ENCODE measurements at regions of chrX and their contacts with region 1.

Region 1: DNA sequence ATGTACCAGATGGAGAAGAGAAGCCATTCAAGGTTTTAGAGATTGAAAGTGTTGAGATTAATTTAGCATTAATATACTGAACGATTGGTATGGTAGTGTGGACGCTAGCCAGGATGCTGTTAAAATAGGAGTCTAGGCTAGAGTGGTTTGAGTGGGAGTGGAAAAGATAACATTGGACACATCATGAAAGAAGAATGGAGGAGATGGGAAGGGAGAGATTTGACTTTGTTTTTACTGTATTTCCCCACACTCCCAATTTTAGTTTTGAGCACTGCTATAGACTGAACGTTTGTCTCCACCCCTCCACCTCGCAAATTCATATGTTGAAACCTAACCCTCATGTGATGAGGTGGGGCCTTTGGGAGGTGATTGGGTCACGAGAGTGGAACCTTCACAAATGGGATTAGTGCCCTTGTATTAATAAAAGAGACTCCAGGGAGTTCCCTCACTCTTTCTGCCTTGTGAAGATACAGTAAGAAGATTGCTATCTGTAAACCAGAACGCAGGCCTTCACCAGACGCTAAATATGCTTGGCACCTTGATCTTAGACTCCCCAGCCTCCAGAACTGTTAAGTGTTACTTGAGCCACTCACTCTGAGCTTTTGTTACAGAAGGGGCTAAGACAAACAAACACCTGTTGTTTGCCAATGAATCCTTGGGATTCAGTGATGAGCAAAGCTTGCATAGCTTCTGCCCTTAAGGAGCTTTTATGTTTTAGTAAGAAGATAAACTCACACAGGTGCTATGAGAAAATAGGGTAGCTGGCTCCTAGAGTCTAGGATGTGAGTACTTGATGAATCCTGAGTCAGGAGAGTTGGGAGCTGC is 25.8 kb downstream of the USP9X start:
- DNase-seq: no peak
- ATAC-seq: no peak
- H3K4me3 ChIP-seq: no peak overlapping the region
- H3K27ac ChIP-seq: no peak overlapping the region
- H3K4me1 ChIP-seq: peaks cover 4% of the 10 kb centered on the region; the same call in 1 of the 2 replicates
- H3K27me3 ChIP-seq: no peaks in the 10 kb centered on the region
- CTCF ChIP-seq: no peak
- EP300 ChIP-seq: no peak
- POLR2A ChIP-seq: no peak
- RAD21 ChIP-seq: no peak

Region 2: GRCh38 chrX:41090568-41091238 is 20.3 kb before region 1 on chrX:
- CTCF ChIA-PET with region 1: interaction called, 29 read pairs
- POLR2A ChIA-PET with region 1: interaction called, 16 read pairs
- RAD21 ChIA-PET with region 1: interaction called, 78 read pairs
- SMC1A ChIA-PET with region 1: interaction called, 52 read pairs
- in situ Hi-C with region 1: no loop called
- intact Hi-C with region 1: loop called (anchors 2 kb)
- DNase-seq: no peak
- ATAC-seq: no peak
- H3K4me3 ChIP-seq: peak overlapping the region; percentile 35
- H3K27ac ChIP-seq: peak overlapping the region; percentile 1; the same call in 1 of the 2 replicates
- H3K4me1 ChIP-seq: peaks cover 3% of the 10 kb centered on the region; the same call in 1 of the 2 replicates
- H3K27me3 ChIP-seq: no peaks in the 10 kb centered on the region
- CTCF ChIP-seq: no peak
- EP300 ChIP-seq: no peak
- POLR2A ChIP-seq: no peak
- RAD21 ChIP-seq: no peak

Region 3: GRCh38 chrX:41096339-41096955 is 14.6 kb before region 1 on chrX:
- CTCF ChIA-PET with region 1: interaction called, 29 read pairs
- POLR2A ChIA-PET with region 1: interaction called, 6 read pairs
- RAD21 ChIA-PET with region 1: interaction called, 11 read pairs
- SMC1A ChIA-PET with region 1: interaction called, 52 read pairs
- in situ Hi-C with region 1: no loop called
- intact Hi-C with region 1: no loop called
- DNase-seq: no peak
- ATAC-seq: peak; percentile 10; the same call in 1 of the 3 replicates
- H3K4me3 ChIP-seq: no peak overlapping the region
- H3K27ac ChIP-seq: no peak overlapping the region
- H3K4me1 ChIP-seq: peaks cover 3% of the 10 kb centered on the region; the same call in 1 of the 2 replicates
- H3K27me3 ChIP-seq: no peaks in the 10 kb centered on the region
- CTCF ChIP-seq: no peak
- EP300 ChIP-seq: no peak
- POLR2A ChIP-seq: no peak
- RAD21 ChIP-seq: no peak

Measured in GM12878 (cell line).